Caco-2 (cell line): ENCODE measurements at regions of chr12 and their contacts with region 1.

Region 1: GRCh38 chr12:48890657-48891418 is 25.2 kb upstream of the RND1 start:
- DNase-seq: peak; percentile 97 to 99
- H3K4me3 ChIP-seq: peak overlapping the region; percentile 50
- H3K4me3 Mint-ChIP-seq: peak overlapping the region; percentile 63
- H3K27ac Mint-ChIP-seq: peak overlapping the region; percentile 66
- H3K4me1 ChIP-seq: peaks cover 33% of the 10 kb centered on the region
- H3K4me1 Mint-ChIP-seq: peaks cover 36% of the 10 kb centered on the region
- H3K27me3 ChIP-seq: no peaks in the 10 kb centered on the region
- H3K27me3 Mint-ChIP-seq: no peaks in the 10 kb centered on the region
- CTCF ChIP-seq: peak; percentile 98 to 99

Region 2: GRCh38 chr12:48814262-48815125 is 76.3 kb before region 1 on chr12:
- CTCF ChIA-PET with region 1: interaction called, 11 read pairs
- POLR2A ChIA-PET with region 1: no interaction called
- intact Hi-C with region 1: no loop called
- DNase-seq: peak; percentile 83 to 96
- H3K4me3 ChIP-seq: peak overlapping the region; percentile 91
- H3K4me3 Mint-ChIP-seq: peak overlapping the region; percentile 97
- H3K27ac Mint-ChIP-seq: peak overlapping the region; percentile 58
- H3K4me1 ChIP-seq: peaks cover 21% of the 10 kb centered on the region
- H3K4me1 Mint-ChIP-seq: peaks cover 18% of the 10 kb centered on the region
- H3K27me3 ChIP-seq: no peaks in the 10 kb centered on the region
- H3K27me3 Mint-ChIP-seq: no peaks in the 10 kb centered on the region
- CTCF ChIP-seq: peak; percentile 99

Region 3: DNA sequence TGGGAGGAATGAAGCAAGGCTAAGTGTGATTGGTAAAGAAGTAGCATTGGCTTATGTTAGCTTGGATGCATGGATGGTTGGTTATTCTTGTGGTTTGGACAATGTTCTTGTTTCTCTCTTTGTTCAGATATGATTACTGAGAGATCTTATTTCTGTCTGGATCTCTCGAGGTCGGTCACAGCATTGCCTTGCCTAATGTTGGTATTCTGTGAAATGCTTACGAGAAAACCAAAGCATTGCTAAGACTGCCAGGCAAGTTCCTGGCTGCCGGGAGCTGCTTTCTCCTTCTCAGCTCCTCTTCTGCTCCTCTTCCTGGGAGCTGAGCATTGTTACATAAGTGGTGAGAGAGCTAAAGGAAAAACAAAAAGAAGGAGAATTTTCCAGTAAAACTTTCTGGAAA is 17.7 kb before region 1 on chr12:
- CTCF ChIA-PET with region 1: interaction called, 13 read pairs
- POLR2A ChIA-PET with region 1: no interaction called
- intact Hi-C with region 1: no loop called
- DNase-seq: no peak
- H3K4me3 ChIP-seq: no peak overlapping the region
- H3K4me3 Mint-ChIP-seq: no peak overlapping the region
- H3K27ac Mint-ChIP-seq: no peak overlapping the region
- H3K4me1 ChIP-seq: peaks cover 6% of the 10 kb centered on the region
- H3K4me1 Mint-ChIP-seq: peaks cover 6% of the 10 kb centered on the region
- H3K27me3 ChIP-seq: no peaks in the 10 kb centered on the region
- H3K27me3 Mint-ChIP-seq: no peaks in the 10 kb centered on the region
- CTCF ChIP-seq: no peak

Region 4: GRCh38 chr12:48924617-48925303 is 33.9 kb after region 1 on chr12:
- CTCF ChIA-PET with region 1: interaction called, 15 read pairs
- POLR2A ChIA-PET with region 1: interaction called, 6 read pairs
- intact Hi-C with region 1: no loop called
- DNase-seq: peak; percentile 81 to 85
- H3K4me3 ChIP-seq: peak overlapping the region; percentile 73
- H3K4me3 Mint-ChIP-seq: peak overlapping the region; percentile 83
- H3K27ac Mint-ChIP-seq: peak overlapping the region; percentile 76
- H3K4me1 ChIP-seq: peaks cover 5% of the 10 kb centered on the region; the same call in 1 of the 2 replicates
- H3K4me1 Mint-ChIP-seq: no peaks in the 10 kb centered on the region
- H3K27me3 ChIP-seq: no peaks in the 10 kb centered on the region
- H3K27me3 Mint-ChIP-seq: no peaks in the 10 kb centered on the region
- CTCF ChIP-seq: peak; percentile 72 to 96

Region 5: DNA sequence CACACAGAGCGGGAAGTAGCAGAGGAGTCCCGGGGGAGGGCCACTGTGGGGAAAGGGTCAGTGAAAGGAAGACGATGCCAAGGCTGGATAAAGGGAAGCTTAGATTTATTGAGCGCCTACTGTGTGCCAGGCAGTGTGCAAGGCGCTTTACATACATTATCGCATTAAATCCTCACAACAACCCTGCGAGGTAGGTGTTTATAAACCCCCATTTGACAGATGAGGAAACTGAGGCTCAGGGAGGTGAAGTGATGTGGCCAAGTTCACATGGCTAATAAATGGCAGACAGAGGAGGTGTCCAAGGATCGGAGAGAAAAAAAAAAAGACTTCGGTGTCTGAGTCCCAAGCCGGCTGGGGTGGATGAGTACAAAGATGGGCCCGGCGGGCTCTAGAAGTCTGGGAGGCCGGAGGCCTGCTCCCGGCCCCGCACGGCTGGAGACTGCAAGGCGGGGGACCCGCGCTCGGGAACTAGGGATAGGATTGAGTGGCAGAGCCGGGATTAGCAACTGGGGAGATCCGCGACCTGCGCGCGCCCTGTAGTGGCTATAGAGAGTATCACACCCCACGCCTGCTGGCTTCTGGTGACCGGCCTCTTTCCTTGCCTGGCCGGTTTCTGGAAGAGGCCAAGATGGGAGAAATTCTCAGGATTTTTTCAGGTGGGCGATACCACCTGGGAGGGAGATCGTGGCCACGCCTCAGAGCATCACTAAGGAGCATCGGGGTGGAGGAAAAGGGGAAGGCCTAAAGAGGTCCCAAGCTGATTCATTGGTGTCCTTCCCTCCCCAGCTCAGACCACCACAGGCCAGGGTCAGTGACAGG is 104.4 kb after region 1 on chr12:
- CTCF ChIA-PET with region 1: interaction called, 12 read pairs
- POLR2A ChIA-PET with region 1: interaction called, 9 read pairs
- intact Hi-C with region 1: no loop called
- DNase-seq: peak; percentile 93 to 96
- H3K4me3 ChIP-seq: no peak overlapping the region
- H3K4me3 Mint-ChIP-seq: peak overlapping the region; percentile 59
- H3K27ac Mint-ChIP-seq: peak overlapping the region; percentile 5
- H3K4me1 ChIP-seq: peaks cover 28% of the 10 kb centered on the region
- H3K4me1 Mint-ChIP-seq: peaks cover 28% of the 10 kb centered on the region
- H3K27me3 ChIP-seq: no peaks in the 10 kb centered on the region
- H3K27me3 Mint-ChIP-seq: no peaks in the 10 kb centered on the region
- CTCF ChIP-seq: peak; percentile 93 to 95

Region 6: GRCh38 chr12:49274396-49275286 is 383.8 kb after region 1 on chr12:
- CTCF ChIA-PET with region 1: no interaction called
- POLR2A ChIA-PET with region 1: no interaction called
- intact Hi-C with region 1: no loop called
- DNase-seq: no peak
- H3K4me3 ChIP-seq: no peak overlapping the region
- H3K4me3 Mint-ChIP-seq: no peak overlapping the region
- H3K27ac Mint-ChIP-seq: no peak overlapping the region
- H3K4me1 ChIP-seq: peaks cover 2% of the 10 kb centered on the region; the same call in 1 of the 2 replicates
- H3K4me1 Mint-ChIP-seq: no peaks in the 10 kb centered on the region
- H3K27me3 ChIP-seq: no peaks in the 10 kb centered on the region
- H3K27me3 Mint-ChIP-seq: no peaks in the 10 kb centered on the region
- CTCF ChIP-seq: no peak